Heart left ventricle (tissue), 16 donors: ENCODE measurements at regions of chr1 and their contacts with region 1.

Region 1: GRCh38 chr1:193406901-193407300 is 220.5 kb upstream of the B3GALT2 start:
- DNase-seq: no peak
- ATAC-seq: peak in 1 of 4 donors; percentile 31
- H3K4me3 ChIP-seq: no peak overlapping the region
- H3K27ac ChIP-seq: peak overlapping the region in 3 of 12 donors; percentile 0 to 26 (median 13)
- H3K4me1 ChIP-seq: peaks cover 0 to 28% (median 8%) of the 10 kb centered on the region in 12 donors
- H3K27me3 ChIP-seq: no peaks in the 10 kb centered on the region
- CTCF ChIP-seq: peak; percentile 50 to 81 (median 73)
- POLR2A ChIP-seq: no peak

Region 2: DNA sequence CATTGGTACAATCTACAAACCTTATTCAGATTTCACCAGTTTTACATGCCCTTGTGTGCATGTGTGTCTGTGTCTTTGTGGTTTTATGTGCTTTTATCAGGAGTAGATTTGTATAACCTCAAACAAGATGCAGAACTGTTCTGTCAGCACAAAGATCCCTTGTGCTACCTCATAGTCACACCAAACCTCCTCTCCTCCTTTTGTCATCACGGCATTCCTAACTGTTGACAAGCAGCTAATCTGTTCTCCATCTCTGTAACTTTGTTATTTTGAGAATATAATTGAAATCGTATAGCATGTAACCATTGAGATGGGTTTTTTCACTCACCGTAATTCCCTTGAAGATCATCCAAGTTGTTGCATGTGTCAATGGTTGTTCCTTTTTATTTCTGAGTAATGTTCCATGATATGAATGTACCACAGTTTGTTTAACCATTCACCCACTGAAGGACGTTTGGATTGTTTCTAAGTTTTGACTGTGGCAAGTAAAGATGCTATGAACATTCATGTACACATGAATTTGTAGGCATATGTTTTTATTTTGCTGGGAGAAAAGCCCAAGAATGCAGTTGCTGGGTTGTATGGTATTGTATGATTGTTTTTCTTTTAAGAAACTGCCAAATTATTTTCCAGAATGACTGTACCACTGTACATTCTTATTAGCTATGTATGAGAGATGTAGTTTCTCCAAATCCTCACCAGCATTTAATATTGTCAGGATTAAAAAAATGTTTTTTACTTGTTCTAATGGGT is 142.4 kb before region 1 on chr1:
- intact Hi-C with region 1: loop called in 1 of 10 experiments (anchors 5 kb)
- DNase-seq: no peak
- ATAC-seq: no peak
- H3K4me3 ChIP-seq: no peak overlapping the region
- H3K27ac ChIP-seq: no peak overlapping the region
- H3K4me1 ChIP-seq: peaks cover 0 to 20% (median 0%) of the 10 kb centered on the region in 12 donors
- H3K27me3 ChIP-seq: no peaks in the 10 kb centered on the region
- CTCF ChIP-seq: no peak
- POLR2A ChIP-seq: no peak

Region 3: GRCh38 chr1:193471981-193472380 is 65.1 kb after region 1 on chr1:
- intact Hi-C with region 1: no loop called
- DNase-seq: no peak
- ATAC-seq: no peak
- H3K4me3 ChIP-seq: no peak overlapping the region
- H3K27ac ChIP-seq: no peak overlapping the region
- H3K4me1 ChIP-seq: no peaks in the 10 kb centered on the region
- H3K27me3 ChIP-seq: no peaks in the 10 kb centered on the region
- CTCF ChIP-seq: no peak
- POLR2A ChIP-seq: no peak

Region 4: GRCh38 chr1:193589597-193590040 is 182.7 kb after region 1 on chr1:
- intact Hi-C with region 1: loop called in 1 of 10 experiments (anchors 10 kb)
- DNase-seq: peak in 3 of 5 donors; percentile 19 to 31 (median 19)
- ATAC-seq: peak; percentile 77 to 87 (median 82)
- H3K4me3 ChIP-seq: peak overlapping the region in 2 of 12 donors; percentile 3 to 13
- H3K27ac ChIP-seq: peak overlapping the region in 10 of 12 donors; percentile 3 to 67 (median 41)
- H3K4me1 ChIP-seq: peaks cover 0 to 49% (median 18%) of the 10 kb centered on the region in 12 donors
- H3K27me3 ChIP-seq: no peaks in the 10 kb centered on the region
- CTCF ChIP-seq: no peak
- POLR2A ChIP-seq: no peak

Region 5: DNA sequence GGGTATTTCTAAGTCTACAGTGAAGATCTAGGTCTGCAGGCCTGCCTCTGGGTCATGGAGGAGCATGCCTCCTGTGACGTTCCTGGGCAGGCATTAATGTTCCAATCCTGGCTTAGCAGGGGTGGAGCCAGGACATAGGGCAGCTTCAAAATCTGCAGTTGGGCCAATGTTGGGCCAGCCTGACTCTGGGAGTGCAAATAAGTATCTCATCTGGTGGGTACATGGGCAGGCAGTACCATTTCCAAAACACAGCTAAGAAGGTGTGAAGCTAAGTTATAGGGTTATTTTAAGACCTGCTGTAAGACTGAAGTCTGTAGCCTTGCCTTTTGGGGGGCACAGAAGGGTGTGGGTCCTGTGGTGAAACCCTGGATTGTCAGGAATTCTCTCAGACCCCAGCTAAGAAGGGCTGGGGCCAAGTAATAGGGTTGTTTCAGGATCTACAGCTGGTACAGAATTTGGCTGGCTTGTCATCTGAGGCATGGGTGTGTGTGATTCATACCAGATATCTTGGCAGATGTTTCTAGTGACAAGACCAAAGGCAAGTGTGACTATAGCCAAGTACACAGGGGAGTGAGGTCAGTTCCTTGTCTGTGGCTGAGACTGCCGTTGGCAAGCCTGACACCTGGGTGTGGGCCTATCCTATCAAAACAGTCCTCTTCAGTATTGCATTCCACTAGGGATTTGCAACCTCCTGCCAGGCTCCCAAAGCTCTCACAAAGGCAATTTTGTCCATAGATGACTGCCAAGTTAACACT is 248.2 kb after region 1 on chr1:
- intact Hi-C with region 1: loop called in 1 of 10 experiments (anchors 2 kb)
- DNase-seq: peak in 4 of 5 donors; percentile 34 to 78 (median 62)
- ATAC-seq: peak; percentile 87 to 99 (median 94)
- H3K4me3 ChIP-seq: no peak overlapping the region
- H3K27ac ChIP-seq: peak overlapping the region in 2 of 12 donors; percentile 11 to 42
- H3K4me1 ChIP-seq: peaks cover 0 to 12% (median 0%) of the 10 kb centered on the region in 12 donors
- H3K27me3 ChIP-seq: no peaks in the 10 kb centered on the region
- CTCF ChIP-seq: no peak
- POLR2A ChIP-seq: no peak

Region 6: DNA sequence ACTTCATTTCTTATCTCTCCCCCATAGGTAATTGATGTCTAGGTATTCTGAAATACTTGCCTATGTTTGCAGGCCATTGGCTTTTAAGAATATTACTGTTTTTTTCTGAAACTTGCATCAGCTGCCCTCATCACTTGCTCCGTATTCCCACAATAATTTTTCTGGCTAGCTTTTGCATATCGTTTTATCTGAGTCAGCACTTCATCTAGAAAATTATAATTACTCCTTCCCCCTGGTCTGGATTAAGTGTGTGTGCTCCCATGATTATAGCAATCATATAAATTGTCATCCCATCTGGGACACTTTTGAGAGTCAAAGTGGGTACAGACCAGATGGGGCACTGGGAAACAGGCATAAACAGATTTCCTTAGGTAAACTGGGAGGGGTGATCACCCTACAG is 362.8 kb after region 1 on chr1:
- intact Hi-C with region 1: no loop called
- DNase-seq: no peak
- ATAC-seq: no peak
- H3K4me3 ChIP-seq: no peak overlapping the region
- H3K27ac ChIP-seq: no peak overlapping the region
- H3K4me1 ChIP-seq: peaks cover 0 to 7% (median 0%) of the 10 kb centered on the region in 12 donors
- H3K27me3 ChIP-seq: no peaks in the 10 kb centered on the region
- CTCF ChIP-seq: no peak
- POLR2A ChIP-seq: no peak

Region 7: DNA sequence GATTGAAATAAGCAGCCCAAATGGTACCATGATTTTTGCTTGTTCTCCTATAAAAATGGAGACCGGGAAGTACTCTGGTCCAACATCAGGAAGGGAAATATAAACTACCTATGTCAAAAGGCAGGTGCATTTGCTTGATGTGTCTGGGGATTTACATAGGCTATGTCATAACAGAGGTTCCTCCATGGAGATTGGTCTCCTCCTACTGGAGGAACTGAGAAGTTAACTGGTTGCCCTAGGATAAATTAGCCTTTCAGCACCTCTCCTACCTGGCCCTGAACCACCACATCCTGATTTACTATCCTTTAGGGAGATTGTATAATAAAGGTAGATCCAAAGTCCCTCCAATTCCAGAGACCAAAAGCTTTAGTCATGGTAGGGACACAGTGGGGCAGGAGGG is 888.8 kb after region 1 on chr1:
- intact Hi-C with region 1: loop called in 1 of 10 experiments (anchors 10 kb)
- DNase-seq: no peak
- ATAC-seq: peak; percentile 71 to 86 (median 80)
- H3K4me3 ChIP-seq: no peak overlapping the region
- H3K27ac ChIP-seq: no peak overlapping the region
- H3K4me1 ChIP-seq: no peaks in the 10 kb centered on the region
- H3K27me3 ChIP-seq: no peaks in the 10 kb centered on the region
- CTCF ChIP-seq: peak; percentile 41 to 63 (median 53)
- POLR2A ChIP-seq: no peak